ENCODE measurements at regions of chr6 and their contacts with region 1.

Region 1: DNA sequence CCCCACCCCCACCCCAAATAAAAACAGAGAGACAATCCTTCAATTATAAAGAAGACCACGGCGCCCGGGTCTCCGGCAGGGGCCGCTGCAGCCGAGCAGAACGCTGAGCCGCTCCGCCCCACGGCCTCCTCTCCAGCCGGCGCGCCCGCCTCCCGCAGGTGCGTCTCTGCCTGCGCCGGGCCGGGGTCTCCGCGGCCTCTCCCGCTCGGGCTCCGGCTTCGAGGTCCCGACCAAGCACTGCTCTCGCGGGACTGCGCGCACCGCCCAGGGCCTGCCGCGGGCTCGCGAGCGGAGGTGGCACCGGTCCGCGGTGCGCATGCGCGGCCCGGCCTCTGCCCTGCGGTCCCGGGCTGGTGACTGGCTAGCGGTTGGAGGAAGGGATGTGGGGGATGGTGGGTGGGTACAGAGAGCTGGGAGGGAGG is 241 bp upstream of the SIRT5 start:
- DNase-seq: peak; percentile 84 to 98 (median 94)
- ATAC-seq: peak; percentile 84
- H3K4me3 ChIP-seq: peak overlapping the region; percentile 93 to 97
- H3K4me3 Mint-ChIP-seq: peak overlapping the region; percentile 97
- H3K27ac ChIP-seq: peak overlapping the region; percentile 80 to 85
- H3K27ac Mint-ChIP-seq: peak overlapping the region; percentile 97
- H3K4me1 ChIP-seq: peaks cover 4% of the 10 kb centered on the region
- H3K4me1 Mint-ChIP-seq: peaks cover 28% of the 10 kb centered on the region
- H3K27me3 ChIP-seq: no peaks in the 10 kb centered on the region
- H3K27me3 Mint-ChIP-seq: no peaks in the 10 kb centered on the region
- CTCF ChIP-seq: peak; percentile 56

Region 2: GRCh38 chr6:13487122-13488014 is 86.8 kb before region 1 on chr6 and contains the start of gene GFOD1:
- CTCF ChIA-PET with region 1: interaction called, 11 read pairs
- POLR2A ChIA-PET with region 1: interaction called, 5 read pairs
- intact Hi-C with region 1: loop called (anchors 1 to 2 kb)
- DNase-seq: peak; percentile 28 to 87 (median 69)
- ATAC-seq: peak; percentile 76
- H3K4me3 ChIP-seq: peak within 1 kb of the TSS; percentile 72 to 80
- H3K4me3 Mint-ChIP-seq: peak within 1 kb of the TSS; percentile 86
- H3K27ac ChIP-seq: peak within 1 kb of the TSS; percentile 36 to 51
- H3K27ac Mint-ChIP-seq: peak within 1 kb of the TSS; percentile 60
- H3K4me1 ChIP-seq: peaks cover 11% of the 10 kb centered on the region
- H3K4me1 Mint-ChIP-seq: peaks cover 36% of the 10 kb centered on the region
- H3K27me3 ChIP-seq: no peaks in the 10 kb centered on the region
- H3K27me3 Mint-ChIP-seq: peaks cover 7% of the 10 kb centered on the region
- CTCF ChIP-seq: no peak
- total RNA-seq, gene GFOD1: 5.6 to 7.6 TPM

Region 3: DNA sequence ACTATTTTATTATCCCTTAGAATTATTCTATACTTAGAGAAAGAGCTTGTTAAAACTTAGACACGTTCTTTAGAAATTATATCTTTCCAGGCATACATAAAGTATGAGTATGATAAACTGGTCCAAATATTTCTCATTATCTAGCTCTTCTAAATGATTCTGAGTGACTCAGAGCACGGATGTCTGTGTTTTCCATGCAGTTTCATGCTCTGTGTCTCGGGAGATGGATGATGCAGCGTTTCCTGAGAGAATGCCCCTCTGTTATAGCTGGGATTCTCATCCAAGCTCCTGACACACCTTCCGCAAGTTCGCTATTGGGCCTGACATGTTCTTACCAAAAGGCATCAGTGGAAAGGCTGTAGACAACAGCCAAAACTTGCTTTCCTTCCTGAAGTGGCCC is 19.6 kb after region 1 on chr6:
- CTCF ChIA-PET with region 1: interaction called, 10 read pairs
- POLR2A ChIA-PET with region 1: interaction called, 4 read pairs
- intact Hi-C with region 1: no loop called
- DNase-seq: no peak
- ATAC-seq: no peak
- H3K4me3 ChIP-seq: no peak overlapping the region
- H3K4me3 Mint-ChIP-seq: no peak overlapping the region
- H3K27ac ChIP-seq: no peak overlapping the region
- H3K27ac Mint-ChIP-seq: no peak overlapping the region
- H3K4me1 ChIP-seq: no peaks in the 10 kb centered on the region
- H3K4me1 Mint-ChIP-seq: no peaks in the 10 kb centered on the region
- H3K27me3 ChIP-seq: no peaks in the 10 kb centered on the region
- H3K27me3 Mint-ChIP-seq: no peaks in the 10 kb centered on the region
- CTCF ChIP-seq: no peak

Region 4: GRCh38 chr6:13767121-13767808 is 193.1 kb after region 1 on chr6:
- CTCF ChIA-PET with region 1: interaction called, 3 read pairs
- POLR2A ChIA-PET with region 1: no interaction called
- intact Hi-C with region 1: loop called (anchors 1 kb)
- DNase-seq: peak; percentile 11 to 77 (median 53)
- ATAC-seq: peak; percentile 83
- H3K4me3 ChIP-seq: peak overlapping the region; percentile 16 to 21
- H3K4me3 Mint-ChIP-seq: peak overlapping the region; percentile 73
- H3K27ac ChIP-seq: no peak overlapping the region
- H3K27ac Mint-ChIP-seq: no peak overlapping the region
- H3K4me1 ChIP-seq: peaks cover 18% of the 10 kb centered on the region
- H3K4me1 Mint-ChIP-seq: peaks cover 33% of the 10 kb centered on the region
- H3K27me3 ChIP-seq: no peaks in the 10 kb centered on the region
- H3K27me3 Mint-ChIP-seq: no peaks in the 10 kb centered on the region
- CTCF ChIP-seq: peak; percentile 10

Region 5: GRCh38 chr6:14009431-14009830 is 435.3 kb after region 1 on chr6:
- CTCF ChIA-PET with region 1: no interaction called
- POLR2A ChIA-PET with region 1: no interaction called
- intact Hi-C with region 1: no loop called
- DNase-seq: no peak
- ATAC-seq: no peak
- H3K4me3 ChIP-seq: no peak overlapping the region
- H3K4me3 Mint-ChIP-seq: no peak overlapping the region
- H3K27ac ChIP-seq: no peak overlapping the region
- H3K27ac Mint-ChIP-seq: no peak overlapping the region
- H3K4me1 ChIP-seq: no peaks in the 10 kb centered on the region
- H3K4me1 Mint-ChIP-seq: no peaks in the 10 kb centered on the region
- H3K27me3 ChIP-seq: peaks cover 0 to 3% of the 10 kb centered on the region in 2 experiments
- H3K27me3 Mint-ChIP-seq: peaks cover 5% of the 10 kb centered on the region
- CTCF ChIP-seq: no peak

Region 6: GRCh38 chr6:14066782-14067406 is 492.7 kb after region 1 on chr6:
- CTCF ChIA-PET with region 1: interaction called, 3 read pairs
- POLR2A ChIA-PET with region 1: no interaction called
- intact Hi-C with region 1: loop called in 1 of 2 experiments (anchors 5 kb)
- DNase-seq: peak in 3 of 9 experiments; percentile 8 to 74 (median 64)
- ATAC-seq: peak; percentile 78
- H3K4me3 ChIP-seq: no peak overlapping the region
- H3K4me3 Mint-ChIP-seq: no peak overlapping the region
- H3K27ac ChIP-seq: no peak overlapping the region
- H3K27ac Mint-ChIP-seq: no peak overlapping the region
- H3K4me1 ChIP-seq: no peaks in the 10 kb centered on the region
- H3K4me1 Mint-ChIP-seq: no peaks in the 10 kb centered on the region
- H3K27me3 ChIP-seq: peaks cover 0 to 3% of the 10 kb centered on the region in 2 experiments
- H3K27me3 Mint-ChIP-seq: peaks cover 10% of the 10 kb centered on the region
- CTCF ChIP-seq: peak; percentile 60